CD8-positive, alpha-beta T cell (primary cell): ENCODE measurements at regions of chr11 and their contacts with region 1.

Region 1: DNA sequence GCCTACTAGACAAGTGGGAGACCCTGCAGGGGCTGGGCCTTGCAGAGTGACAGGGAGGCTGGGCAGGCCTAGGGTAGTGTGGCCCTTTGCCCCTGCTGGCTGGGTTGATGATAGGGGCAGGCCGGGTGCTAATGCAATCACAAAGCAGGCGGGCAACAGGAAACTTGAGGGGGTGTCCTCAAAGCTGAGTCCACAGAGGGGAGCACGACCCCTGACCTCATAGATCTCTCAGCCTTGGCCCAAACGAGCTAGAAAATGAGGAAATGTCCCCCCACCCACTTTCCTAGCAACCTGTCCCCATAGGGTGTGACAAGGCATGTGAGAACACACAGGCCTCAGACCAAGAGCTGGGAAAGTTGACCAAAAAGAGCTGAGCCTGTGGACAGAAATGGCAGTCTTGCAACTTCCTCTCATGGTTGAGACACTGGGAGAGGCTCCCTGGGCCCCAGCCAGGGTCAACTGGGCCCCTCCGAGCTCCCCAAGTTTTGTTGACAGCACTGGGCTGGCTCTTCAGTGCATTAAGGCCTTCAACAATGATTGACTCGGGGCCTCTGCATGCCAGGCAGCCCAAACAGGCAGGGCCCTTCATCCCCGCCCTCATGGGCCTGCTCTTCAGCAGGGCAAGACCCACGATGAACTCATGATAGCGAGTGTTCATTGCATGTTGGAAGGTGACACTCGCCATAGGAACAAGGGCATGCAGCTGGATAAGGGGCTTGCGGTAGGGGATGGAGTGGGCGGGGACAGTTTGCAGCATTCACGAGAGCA is 9.7 kb upstream of the SPI1 start:
- DNase-seq: peak in 1 of 9 experiments; percentile 18
- ATAC-seq: no peak
- H3K4me3 ChIP-seq: no peak overlapping the region
- H3K4me3 Mint-ChIP-seq: peak overlapping the region; percentile 11
- H3K27ac ChIP-seq: no peak overlapping the region
- H3K27ac Mint-ChIP-seq: no peak overlapping the region
- H3K4me1 ChIP-seq: peaks cover 33% of the 10 kb centered on the region
- H3K4me1 Mint-ChIP-seq: peaks cover 41% of the 10 kb centered on the region
- H3K27me3 ChIP-seq: no peaks in the 10 kb centered on the region
- H3K27me3 Mint-ChIP-seq: no peaks in the 10 kb centered on the region
- CTCF ChIP-seq: no peak

Region 2: GRCh38 chr11:47399860-47400767 is 12.0 kb after region 1 on chr11:
- CTCF ChIA-PET with region 1: interaction called, 10 read pairs
- POLR2A ChIA-PET with region 1: interaction called, 14 read pairs
- intact Hi-C with region 1: no loop called
- DNase-seq: peak in 8 of 9 experiments; percentile 29 to 74 (median 42)
- ATAC-seq: peak; percentile 88
- H3K4me3 ChIP-seq: peak overlapping the region; percentile 63 to 82
- H3K4me3 Mint-ChIP-seq: peak overlapping the region; percentile 81
- H3K27ac ChIP-seq: peak overlapping the region; percentile 56 to 60
- H3K27ac Mint-ChIP-seq: peak overlapping the region; percentile 71
- H3K4me1 ChIP-seq: peaks cover 28% of the 10 kb centered on the region
- H3K4me1 Mint-ChIP-seq: peaks cover 34% of the 10 kb centered on the region
- H3K27me3 ChIP-seq: no peaks in the 10 kb centered on the region
- H3K27me3 Mint-ChIP-seq: no peaks in the 10 kb centered on the region
- CTCF ChIP-seq: no peak